HEK293 (cell line): ENCODE measurements at regions of chr10 and their contacts with region 1.

Region 1: DNA sequence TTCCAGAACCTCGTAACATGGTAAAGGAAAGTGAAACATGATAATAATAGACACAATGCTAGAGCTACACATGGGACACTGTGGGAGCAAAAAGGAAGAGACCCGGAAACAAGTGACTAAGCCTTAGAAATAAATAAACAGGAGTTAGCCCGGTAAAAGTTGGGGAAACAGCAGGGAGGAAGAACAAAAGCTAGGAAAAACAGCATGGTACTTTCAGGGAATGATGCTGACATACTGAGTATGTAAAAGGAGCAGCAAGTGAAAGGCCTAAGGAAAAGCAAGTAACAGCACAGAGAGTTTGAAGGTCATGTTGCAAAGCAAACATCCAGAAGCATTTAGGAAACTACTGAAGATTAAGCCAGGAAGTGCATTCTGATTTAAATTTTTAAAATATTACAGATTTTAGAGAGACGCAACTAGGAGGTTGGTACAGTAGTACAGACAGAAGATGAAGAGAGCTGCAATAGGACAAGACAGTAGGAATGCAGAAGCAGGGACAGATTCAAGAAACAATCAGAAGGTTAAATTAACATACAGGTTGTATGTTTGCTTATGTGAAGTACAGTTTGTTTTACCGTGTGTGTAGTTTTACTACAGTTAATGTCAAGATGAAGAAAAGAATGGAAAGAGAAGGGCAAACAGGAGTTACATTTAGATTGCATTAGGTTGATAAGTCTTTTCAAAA is 63.7 kb downstream of the ARHGAP12 start:
- H3K4me3 ChIP-seq: no peak overlapping the region
- H3K27ac ChIP-seq: no peak overlapping the region
- H3K4me1 ChIP-seq: peaks cover 8% of the 10 kb centered on the region; the same call in 1 of the 2 replicates
- CTCF ChIP-seq: no peak

Region 2: DNA sequence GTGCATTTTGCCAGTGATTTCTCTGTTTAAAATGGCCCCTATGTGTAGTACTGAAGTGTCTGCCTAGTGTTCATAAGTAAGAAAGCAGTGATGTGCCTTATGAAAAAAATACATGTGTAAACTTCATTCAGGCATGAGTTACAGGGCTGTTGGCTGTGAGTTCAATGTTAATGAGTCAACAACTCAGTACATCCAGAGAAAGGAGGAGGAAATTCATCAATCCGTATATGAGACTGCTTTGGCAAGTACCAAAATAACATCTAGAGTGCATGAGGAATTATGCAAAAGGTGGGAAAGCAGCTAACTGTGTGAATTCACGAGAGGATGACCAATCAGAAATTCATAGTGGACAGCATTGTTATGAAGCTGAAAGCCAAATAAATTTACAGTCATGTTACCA is 290.4 kb before region 1 on chr10:
- CTCF ChIA-PET with region 1: no interaction called
- POLR2A ChIA-PET with region 1: no interaction called
- H3K4me3 ChIP-seq: no peak overlapping the region
- H3K27ac ChIP-seq: no peak overlapping the region
- H3K4me1 ChIP-seq: no peaks in the 10 kb centered on the region
- CTCF ChIP-seq: no peak

Region 3: DNA sequence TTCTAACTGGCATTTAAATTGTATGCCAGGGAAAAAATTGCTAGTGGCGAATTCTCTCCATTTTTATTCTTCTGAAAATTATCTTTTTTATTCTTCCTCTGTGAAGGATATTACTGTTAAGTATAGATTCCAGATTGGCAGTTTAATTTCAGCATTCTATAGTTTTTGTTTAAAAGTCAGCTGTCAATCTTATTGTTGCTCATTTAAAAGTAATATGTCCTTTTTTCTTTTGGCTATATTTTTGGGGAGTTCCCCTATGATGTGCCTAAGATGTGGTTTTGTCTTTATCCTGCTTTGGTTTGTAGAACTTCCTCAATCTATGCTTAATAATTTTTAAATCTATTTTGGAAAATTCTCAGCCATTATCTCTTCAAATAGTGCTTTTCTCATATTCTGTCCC is 72.2 kb before region 1 on chr10:
- CTCF ChIA-PET with region 1: no interaction called
- POLR2A ChIA-PET with region 1: no interaction called
- H3K4me3 ChIP-seq: no peak overlapping the region
- H3K27ac ChIP-seq: no peak overlapping the region
- H3K4me1 ChIP-seq: no peaks in the 10 kb centered on the region
- CTCF ChIP-seq: no peak

Region 4: GRCh38 chr10:31838065-31838464 is 26.9 kb before region 1 on chr10:
- CTCF ChIA-PET with region 1: interaction called, 10 read pairs
- POLR2A ChIA-PET with region 1: no interaction called
- H3K4me3 ChIP-seq: no peak overlapping the region
- H3K27ac ChIP-seq: no peak overlapping the region
- H3K4me1 ChIP-seq: no peaks in the 10 kb centered on the region
- CTCF ChIP-seq: no peak

Region 5: GRCh38 chr10:31876652-31877352 is 11.8 kb after region 1 on chr10:
- CTCF ChIA-PET with region 1: interaction called, 11 read pairs
- POLR2A ChIA-PET with region 1: no interaction called
- H3K4me3 ChIP-seq: no peak overlapping the region
- H3K27ac ChIP-seq: no peak overlapping the region
- H3K4me1 ChIP-seq: 0 out of 2 replicates have a peak, but pooled peaks cover 4% of the 10 kb centered on the region
- CTCF ChIP-seq: no peak

Region 6: DNA sequence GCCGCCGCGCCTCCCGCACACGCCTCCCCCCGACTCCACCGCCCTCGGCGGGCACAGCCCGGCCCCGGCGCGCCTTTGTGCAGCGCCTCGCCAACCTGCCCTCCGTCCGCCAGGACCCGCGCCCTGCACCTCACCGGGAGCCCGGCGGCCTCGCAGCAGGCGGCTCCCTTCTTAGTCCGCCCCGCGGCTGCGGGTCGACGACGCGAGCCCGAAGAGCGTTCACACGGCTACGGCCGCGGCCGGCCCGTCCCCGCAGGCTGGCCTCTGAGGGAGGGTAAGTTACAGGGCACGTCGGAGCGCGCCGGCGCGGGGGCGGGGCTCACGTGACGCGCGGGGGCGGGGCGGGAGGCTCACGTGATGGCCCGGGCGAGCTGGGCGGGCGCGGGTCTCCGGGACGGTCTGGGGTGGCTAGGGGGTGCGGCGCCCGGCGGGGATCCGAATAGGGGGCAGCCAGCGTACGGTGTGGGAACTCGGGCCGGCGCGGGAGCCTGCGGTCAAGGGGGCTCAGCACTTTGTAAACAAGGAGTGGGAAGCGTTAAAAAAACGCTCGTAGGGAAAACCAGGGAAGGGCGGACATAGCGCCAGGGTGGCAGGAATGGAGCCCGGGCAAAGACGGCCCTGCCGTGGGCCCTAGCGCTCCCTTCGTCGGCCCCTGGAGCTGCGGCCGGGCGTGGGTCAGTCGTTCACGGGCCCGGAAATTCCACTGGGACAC is 63.7 kb after region 1 on chr10 and contains the start of gene ARHGAP12:
- CTCF ChIA-PET with region 1: interaction called, 5 read pairs
- POLR2A ChIA-PET with region 1: interaction called, 11 read pairs
- H3K4me3 ChIP-seq: peak within 1 kb of the TSS; percentile 78
- H3K27ac ChIP-seq: peak within 1 kb of the TSS; percentile 92
- H3K4me1 ChIP-seq: peaks cover 13% of the 10 kb centered on the region
- CTCF ChIP-seq: no peak

Region 7: GRCh38 chr10:31947144-31947926 is 82.4 kb after region 1 on chr10:
- CTCF ChIA-PET with region 1: interaction called, 34 read pairs
- POLR2A ChIA-PET with region 1: no interaction called
- H3K4me3 ChIP-seq: no peak overlapping the region
- H3K27ac ChIP-seq: no peak overlapping the region
- H3K4me1 ChIP-seq: peaks cover 4% of the 10 kb centered on the region; the same call in 1 of the 2 replicates
- CTCF ChIP-seq: peak; percentile 63

Region 8: DNA sequence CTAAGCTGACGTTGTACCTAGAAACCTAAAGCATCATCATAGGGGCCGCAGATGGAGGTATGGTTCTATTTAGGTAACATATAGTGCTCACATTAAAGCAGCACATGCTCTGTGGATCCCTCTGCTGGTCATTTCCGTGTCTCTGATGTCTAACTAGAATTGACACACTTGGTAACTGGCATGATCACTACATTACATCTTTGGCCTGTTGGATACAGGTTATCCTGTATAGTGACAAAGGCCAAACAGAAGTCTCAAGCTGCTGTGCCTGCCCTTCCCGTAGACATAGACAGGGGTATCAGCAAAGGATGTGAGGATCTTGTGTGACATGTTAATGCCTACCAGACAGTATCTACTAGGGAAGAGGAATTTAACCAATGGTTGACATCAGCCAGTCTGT is 140.1 kb after region 1 on chr10:
- CTCF ChIA-PET with region 1: interaction called, 15 read pairs
- POLR2A ChIA-PET with region 1: interaction called, 4 read pairs
- H3K4me3 ChIP-seq: no peak overlapping the region
- H3K27ac ChIP-seq: no peak overlapping the region
- H3K4me1 ChIP-seq: peaks cover 3% of the 10 kb centered on the region; the same call in 1 of the 2 replicates
- CTCF ChIP-seq: peak; percentile 47; the same call in 1 of the 2 replicates